Caco-2 (cell line): ENCODE measurements at regions of chr2 and their contacts with region 1.

Region 1: DNA sequence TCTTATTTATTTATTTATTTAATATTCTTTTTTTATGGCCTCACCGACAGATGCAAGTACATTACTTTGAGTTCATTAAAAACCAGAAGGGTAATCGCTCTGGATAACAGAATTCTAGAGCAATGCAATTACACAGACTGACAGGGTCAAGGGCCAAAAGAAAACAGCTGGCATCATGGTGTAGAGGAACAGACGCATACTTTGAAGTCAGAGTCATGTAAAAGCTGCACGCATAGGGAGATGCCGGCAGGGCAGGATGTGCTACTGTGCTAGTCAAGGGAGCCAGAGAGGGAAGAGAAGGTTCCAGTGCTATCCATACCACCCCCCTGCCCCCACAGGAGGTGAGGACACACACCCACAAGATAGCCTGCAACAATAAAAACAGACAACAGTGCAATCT is 115.2 kb upstream of the TFCP2L1 start:
- DNase-seq: no peak
- H3K4me3 ChIP-seq: no peak overlapping the region
- H3K4me3 Mint-ChIP-seq: no peak overlapping the region
- H3K27ac Mint-ChIP-seq: no peak overlapping the region
- H3K4me1 ChIP-seq: no peaks in the 10 kb centered on the region; the same call in 1 of the 2 replicates
- H3K4me1 Mint-ChIP-seq: no peaks in the 10 kb centered on the region
- H3K27me3 ChIP-seq: no peaks in the 10 kb centered on the region
- H3K27me3 Mint-ChIP-seq: no peaks in the 10 kb centered on the region
- CTCF ChIP-seq: no peak

Region 2: GRCh38 chr2:121309801-121310200 is 90.4 kb before region 1 on chr2:
- CTCF ChIA-PET with region 1: no interaction called
- POLR2A ChIA-PET with region 1: no interaction called
- intact Hi-C with region 1: no loop called
- DNase-seq: no peak
- H3K4me3 ChIP-seq: no peak overlapping the region
- H3K4me3 Mint-ChIP-seq: no peak overlapping the region
- H3K27ac Mint-ChIP-seq: no peak overlapping the region
- H3K4me1 ChIP-seq: no peaks in the 10 kb centered on the region
- H3K4me1 Mint-ChIP-seq: no peaks in the 10 kb centered on the region
- H3K27me3 ChIP-seq: no peaks in the 10 kb centered on the region; the same call in 1 of the 2 replicates
- H3K27me3 Mint-ChIP-seq: peaks cover 14% of the 10 kb centered on the region
- CTCF ChIP-seq: no peak

Region 3: DNA sequence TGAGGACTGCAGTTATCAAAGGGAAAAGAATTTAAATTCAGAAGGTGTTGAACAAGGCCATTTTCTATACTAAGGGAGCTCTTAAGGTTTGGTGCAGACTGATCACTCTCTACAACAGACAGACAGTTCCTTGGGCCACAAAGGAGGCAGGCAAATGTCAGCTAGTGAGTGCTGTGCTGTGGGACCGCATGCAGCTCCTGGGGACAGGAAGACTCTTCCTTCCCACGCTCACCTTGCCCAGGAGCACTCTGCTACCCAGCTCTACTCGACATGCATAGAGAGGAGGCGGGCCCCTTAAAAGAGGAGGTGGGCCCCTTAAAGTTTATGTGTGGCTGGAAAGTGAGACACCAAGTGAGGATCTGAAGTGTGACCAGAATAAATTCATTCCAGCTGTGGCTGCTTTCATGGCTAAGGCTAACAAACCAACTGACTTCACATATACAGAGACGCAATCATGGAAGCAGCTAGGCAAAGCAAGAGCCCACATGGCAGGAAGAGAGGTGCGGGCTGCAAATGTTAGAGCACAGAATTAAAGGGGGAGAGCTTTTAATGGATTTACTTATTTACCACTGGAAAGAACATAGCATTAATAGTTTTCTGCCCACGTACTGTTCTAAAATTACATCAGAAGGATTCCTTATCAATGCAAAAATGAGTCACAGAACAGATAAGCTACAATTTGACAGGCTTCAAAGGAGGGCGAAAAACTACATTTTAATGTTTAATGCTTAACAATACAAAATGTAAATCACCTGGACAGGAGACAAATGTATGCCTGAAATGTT is 29.1 kb after region 1 on chr2:
- CTCF ChIA-PET with region 1: interaction called, 9 read pairs
- POLR2A ChIA-PET with region 1: no interaction called
- intact Hi-C with region 1: loop called (anchors 1 kb)
- DNase-seq: peak; percentile 30 to 43
- H3K4me3 ChIP-seq: no peak overlapping the region
- H3K4me3 Mint-ChIP-seq: peak overlapping the region; percentile 54
- H3K27ac Mint-ChIP-seq: peak overlapping the region; percentile 78
- H3K4me1 ChIP-seq: peaks cover 30% of the 10 kb centered on the region
- H3K4me1 Mint-ChIP-seq: peaks cover 18% of the 10 kb centered on the region
- H3K27me3 ChIP-seq: no peaks in the 10 kb centered on the region
- H3K27me3 Mint-ChIP-seq: no peaks in the 10 kb centered on the region
- CTCF ChIP-seq: no peak

Region 4: GRCh38 chr2:121479882-121480522 is 79.8 kb after region 1 on chr2:
- CTCF ChIA-PET with region 1: interaction called, 12 read pairs
- POLR2A ChIA-PET with region 1: no interaction called
- intact Hi-C with region 1: no loop called
- DNase-seq: peak in 1 of 2 experiments; percentile 40
- H3K4me3 ChIP-seq: no peak overlapping the region
- H3K4me3 Mint-ChIP-seq: no peak overlapping the region
- H3K27ac Mint-ChIP-seq: no peak overlapping the region
- H3K4me1 ChIP-seq: no peaks in the 10 kb centered on the region; the same call in 1 of the 2 replicates
- H3K4me1 Mint-ChIP-seq: peaks cover 24% of the 10 kb centered on the region
- H3K27me3 ChIP-seq: no peaks in the 10 kb centered on the region
- H3K27me3 Mint-ChIP-seq: no peaks in the 10 kb centered on the region
- CTCF ChIP-seq: peak; percentile 25 to 48

Region 5: GRCh38 chr2:121605820-121606733 is 205.9 kb after region 1 on chr2:
- CTCF ChIA-PET with region 1: no interaction called
- POLR2A ChIA-PET with region 1: no interaction called
- intact Hi-C with region 1: no loop called
- DNase-seq: no peak
- H3K4me3 ChIP-seq: no peak overlapping the region
- H3K4me3 Mint-ChIP-seq: no peak overlapping the region
- H3K27ac Mint-ChIP-seq: no peak overlapping the region
- H3K4me1 ChIP-seq: no peaks in the 10 kb centered on the region
- H3K4me1 Mint-ChIP-seq: no peaks in the 10 kb centered on the region
- H3K27me3 ChIP-seq: no peaks in the 10 kb centered on the region
- H3K27me3 Mint-ChIP-seq: no peaks in the 10 kb centered on the region
- CTCF ChIP-seq: no peak

Region 6: DNA sequence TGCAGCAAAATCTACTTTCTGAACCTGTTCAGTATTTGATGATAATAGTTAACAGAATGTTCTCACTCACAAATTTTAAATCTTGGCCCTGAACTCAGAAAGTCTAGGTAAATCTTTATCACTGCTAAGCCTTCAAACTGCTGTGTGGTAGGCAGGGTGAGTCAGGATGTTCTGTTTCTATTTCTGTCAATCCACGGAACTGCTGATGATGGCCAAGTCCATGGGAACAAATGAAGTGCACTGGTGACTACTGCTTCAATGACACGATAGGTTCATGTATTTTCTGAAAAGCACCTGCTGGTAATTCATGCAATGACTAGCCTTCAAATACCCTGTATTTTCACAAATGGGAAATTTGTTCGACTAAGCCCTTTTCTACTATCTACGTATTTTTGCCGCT is 322.3 kb after region 1 on chr2:
- CTCF ChIA-PET with region 1: interaction called, 4 read pairs
- POLR2A ChIA-PET with region 1: no interaction called
- intact Hi-C with region 1: loop called (anchors 1 kb)
- DNase-seq: no peak
- H3K4me3 ChIP-seq: no peak overlapping the region
- H3K4me3 Mint-ChIP-seq: no peak overlapping the region
- H3K27ac Mint-ChIP-seq: no peak overlapping the region
- H3K4me1 ChIP-seq: no peaks in the 10 kb centered on the region
- H3K4me1 Mint-ChIP-seq: no peaks in the 10 kb centered on the region
- H3K27me3 ChIP-seq: no peaks in the 10 kb centered on the region
- H3K27me3 Mint-ChIP-seq: no peaks in the 10 kb centered on the region
- CTCF ChIP-seq: no peak

Region 7: DNA sequence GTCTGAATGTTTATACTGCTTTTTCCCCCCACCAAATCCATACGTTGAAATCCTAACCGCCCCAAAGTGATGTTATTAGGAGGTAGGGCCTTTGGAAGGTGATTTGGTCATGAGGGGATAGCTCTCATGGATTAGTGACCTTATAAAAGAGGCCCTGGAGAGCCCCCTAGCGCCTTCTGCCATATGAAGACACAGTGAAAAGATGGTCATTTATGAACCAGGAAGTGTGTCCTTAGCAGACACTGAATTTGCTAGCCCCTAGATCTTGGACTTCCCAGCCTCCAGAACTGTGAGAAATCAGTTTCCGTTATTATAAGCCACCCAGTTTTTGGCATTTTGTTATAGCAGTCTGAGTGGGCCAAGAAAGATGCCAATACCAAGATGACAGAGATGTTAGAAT is 348.0 kb after region 1 on chr2:
- CTCF ChIA-PET with region 1: no interaction called
- POLR2A ChIA-PET with region 1: no interaction called
- intact Hi-C with region 1: loop called (anchors 1 kb)
- DNase-seq: no peak
- H3K4me3 ChIP-seq: no peak overlapping the region
- H3K4me3 Mint-ChIP-seq: no peak overlapping the region
- H3K27ac Mint-ChIP-seq: no peak overlapping the region
- H3K4me1 ChIP-seq: no peaks in the 10 kb centered on the region
- H3K4me1 Mint-ChIP-seq: no peaks in the 10 kb centered on the region
- H3K27me3 ChIP-seq: no peaks in the 10 kb centered on the region
- H3K27me3 Mint-ChIP-seq: no peaks in the 10 kb centered on the region
- CTCF ChIP-seq: no peak